Activated naive CD4-positive, alpha-beta T cell treated with anti-CD3 and anti-CD28 coated beads for 36 hours (primary cell): ENCODE measurements at regions of chr19 and their contacts with region 1.

Region 1: DNA sequence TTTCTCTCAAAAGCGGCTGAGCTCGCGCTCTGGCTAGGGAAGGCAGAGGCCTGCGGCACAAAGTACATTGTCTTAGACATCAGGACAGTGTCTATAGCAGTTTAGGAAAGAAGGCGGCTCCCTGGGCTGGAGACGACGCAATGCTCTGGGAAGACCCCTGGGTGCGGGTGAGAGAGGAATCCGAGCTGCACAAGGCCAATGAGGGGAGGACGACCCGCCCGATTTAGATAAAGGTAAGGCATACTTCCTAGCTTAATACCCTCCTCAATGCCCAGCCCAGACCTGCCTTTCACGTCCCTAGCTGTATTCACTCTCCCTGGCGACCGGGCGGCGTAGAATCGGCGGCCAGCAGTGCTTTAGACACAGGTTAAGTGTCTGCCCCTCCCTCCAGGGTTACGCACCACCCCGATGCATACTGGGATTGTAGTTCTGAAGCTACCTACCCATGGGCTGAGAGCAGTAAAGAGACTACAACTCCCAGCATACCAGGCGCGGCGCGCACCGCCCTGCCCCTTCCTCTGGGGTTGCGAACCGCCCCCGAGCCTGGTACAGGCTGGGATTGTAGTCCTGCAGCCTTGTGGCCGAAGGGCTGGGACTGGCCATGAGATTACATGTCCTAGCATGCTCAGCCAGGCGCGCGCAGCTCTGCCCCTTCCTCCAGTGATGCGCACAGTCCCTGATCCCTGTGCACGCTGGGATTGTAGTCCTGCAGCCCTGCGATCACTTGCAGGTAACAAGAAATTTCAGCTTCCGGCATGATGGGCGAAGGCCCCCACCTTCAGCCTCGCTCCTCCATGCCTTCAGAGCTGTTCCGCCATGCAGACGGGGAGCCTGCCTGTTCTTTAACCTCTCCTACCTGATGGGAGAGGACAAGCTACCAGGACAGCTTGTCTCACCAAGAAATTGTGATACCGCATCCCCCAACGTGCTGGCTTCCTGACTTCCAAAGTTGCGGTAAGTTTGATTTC is 43.4 kb upstream of the ZNF14 start:
- DNase-seq: peak; percentile 95
- H3K4me3 Mint-ChIP-seq: peak overlapping the region; percentile 90
- H3K27ac Mint-ChIP-seq: peak overlapping the region; percentile 90
- H3K4me1 Mint-ChIP-seq: peaks cover 44% of the 10 kb centered on the region
- H3K27me3 Mint-ChIP-seq: no peaks in the 10 kb centered on the region

Region 2: DNA sequence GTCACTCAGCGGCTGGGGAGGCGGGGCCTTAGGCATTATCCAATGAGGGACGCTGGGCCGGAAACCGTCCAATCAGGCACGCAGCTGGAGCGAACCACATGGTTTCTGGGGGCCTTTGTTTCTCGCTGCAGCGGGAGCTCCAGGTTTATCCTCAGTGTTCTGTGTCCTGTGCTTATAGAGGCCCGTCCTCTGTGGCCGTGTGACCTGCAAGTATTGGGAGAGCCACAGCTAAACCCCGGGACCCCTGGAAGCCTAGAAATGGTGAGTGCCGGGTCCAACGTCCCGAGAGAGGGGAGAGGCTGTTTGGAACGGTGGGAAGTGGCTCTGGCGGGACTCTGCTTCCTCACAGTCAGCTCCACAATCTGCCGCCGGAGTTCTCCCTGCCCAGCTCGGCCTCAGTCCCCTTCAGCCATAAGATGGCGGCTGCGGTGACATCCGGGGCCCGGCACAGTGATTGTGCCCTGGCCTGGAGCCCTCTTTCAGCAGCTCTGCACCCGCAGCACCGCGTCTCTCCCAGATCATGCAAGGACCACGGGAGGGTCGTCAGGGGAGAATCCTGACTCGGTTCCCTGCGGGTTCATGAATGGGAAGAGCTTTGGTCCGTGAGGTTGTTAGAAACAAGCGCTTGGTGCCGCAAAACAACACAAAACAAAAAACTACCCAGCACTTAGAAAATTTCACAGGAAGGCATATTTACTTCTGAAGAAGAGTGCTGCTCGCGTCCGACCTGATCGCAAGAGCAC is 89.6 kb after region 1 on chr19 and contains the start of gene ZNF253:
- CTCF ChIA-PET with region 1: no interaction called
- intact Hi-C with region 1: loop called (anchors 1 kb)
- DNase-seq: peak; percentile 99
- H3K4me3 Mint-ChIP-seq: peak within 1 kb of the TSS; percentile 100
- H3K27ac Mint-ChIP-seq: peak within 1 kb of the TSS; percentile 99
- H3K4me1 Mint-ChIP-seq: peaks cover 26% of the 10 kb centered on the region
- H3K27me3 Mint-ChIP-seq: no peaks in the 10 kb centered on the region
- total RNA-seq, gene ZNF253: 6.1 to 9.6 TPM